ENCODE measurements at regions of chr10 and their contacts with region 1.

Region 1: DNA sequence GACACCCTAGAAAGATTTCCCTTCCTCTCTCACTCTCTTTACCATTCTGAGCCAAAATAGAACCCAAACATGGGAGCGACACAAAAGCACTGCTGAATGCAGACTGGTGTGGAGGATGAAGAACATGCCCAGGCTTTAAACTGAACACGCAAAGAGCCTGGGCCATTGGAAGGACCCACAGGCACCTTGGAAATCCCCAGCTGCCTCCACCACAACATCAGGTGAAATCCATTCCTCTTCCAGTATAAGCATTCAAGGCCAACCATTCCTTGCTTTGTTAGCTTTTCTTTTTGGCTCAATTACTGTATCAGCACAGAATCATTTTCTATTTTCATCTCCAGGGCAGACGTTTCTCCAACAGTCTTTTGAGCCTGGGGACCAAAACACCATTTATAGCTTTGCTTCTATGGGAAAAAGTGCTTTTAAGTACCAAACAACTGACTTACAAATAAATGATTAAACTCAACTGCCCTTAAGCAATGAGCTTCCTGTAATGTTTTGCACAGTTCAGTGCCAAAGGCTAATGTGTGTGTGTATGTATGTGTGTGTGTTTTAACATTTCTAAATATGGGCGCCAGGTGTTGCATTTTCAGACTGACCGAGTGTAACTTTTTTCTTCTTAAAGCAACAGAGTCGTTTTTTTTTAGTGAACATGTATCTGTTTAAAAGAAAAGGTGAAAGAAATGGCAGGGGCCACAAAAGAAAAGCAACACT is 16.2 kb upstream of the BLNK start:
- DNase-seq: no peak
- ATAC-seq: no peak
- H3K4me3 ChIP-seq: no peak overlapping the region
- H3K27ac ChIP-seq: no peak overlapping the region
- H3K4me1 ChIP-seq: no peaks in the 10 kb centered on the region
- H3K27me3 ChIP-seq: peaks cover 32% of the 10 kb centered on the region
- CTCF ChIP-seq: no peak

Region 2: DNA sequence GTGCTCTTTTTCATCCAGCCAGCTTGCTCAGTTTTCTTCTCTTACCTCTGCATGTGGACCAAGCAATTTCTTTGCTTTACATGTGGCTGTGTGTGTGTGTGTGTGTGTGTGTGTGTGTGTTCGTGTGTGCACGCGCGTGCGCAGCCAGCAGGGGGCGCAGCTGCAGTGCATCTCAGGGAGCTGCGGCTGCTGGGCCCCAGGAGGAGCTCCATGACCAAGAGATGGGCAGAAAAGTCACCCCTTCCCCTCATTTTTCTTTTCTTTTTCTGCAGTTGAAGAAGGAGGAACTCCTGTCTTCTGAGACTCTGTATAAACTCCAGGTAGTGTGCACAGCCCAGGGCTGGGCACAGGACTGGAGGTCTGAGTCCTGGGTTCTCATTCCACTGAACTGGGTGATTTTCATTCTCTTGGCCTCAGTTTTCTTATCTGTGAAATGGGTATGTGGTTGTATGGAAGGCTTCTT is 58.0 kb before region 1 on chr10:
- CTCF ChIA-PET with region 1: interaction called, 12 read pairs
- POLR2A ChIA-PET with region 1: no interaction called
- intact Hi-C with region 1: loop called (anchors 10 kb)
- DNase-seq: peak; percentile 69
- ATAC-seq: peak; percentile 58
- H3K4me3 ChIP-seq: no peak overlapping the region
- H3K27ac ChIP-seq: no peak overlapping the region
- H3K4me1 ChIP-seq: no peaks in the 10 kb centered on the region
- H3K27me3 ChIP-seq: peaks cover 12% of the 10 kb centered on the region; the same call in 1 of the 2 replicates
- CTCF ChIP-seq: peak; percentile 84

Measured in PC-3 (cell line).